Activated T-helper 2 cell treated with anti-CD3 and anti-CD28 coated beads, Interferon-gamma antibody, Interleukin-2, Interleukin-4, amounts not matched to agents 10 μg/mL and 5 μg/mL and 100 μg/mL, durations not matched to agents 14 hours and 24 hours and 36 hours (primary cell): ENCODE measurements at regions of chr3 and their contacts with region 1.

Region 1: DNA sequence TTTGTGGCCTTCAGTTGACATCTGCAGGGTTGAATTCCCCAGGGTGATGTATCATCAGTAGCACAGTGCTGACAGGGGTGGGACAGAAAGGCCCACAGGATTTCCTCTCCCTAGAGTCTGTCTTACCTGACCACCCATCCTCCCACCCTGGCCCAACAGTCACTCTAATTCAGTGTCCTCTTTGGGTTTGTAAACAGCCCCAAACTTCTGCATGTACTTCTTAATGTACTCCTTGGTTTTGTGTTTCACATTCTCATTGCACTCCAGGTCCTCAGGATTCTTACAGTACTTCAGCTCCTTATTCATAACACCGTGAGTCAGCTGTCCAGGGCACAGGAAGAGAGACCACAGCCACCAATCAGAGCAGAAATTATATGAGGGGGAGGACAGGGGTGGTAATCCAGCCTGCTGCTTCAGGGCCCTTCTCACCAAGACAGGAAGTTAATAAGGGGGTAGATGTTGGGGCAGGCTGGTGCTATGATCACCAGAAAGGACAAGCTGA is 37.5 kb downstream of the NBEAL2 start:
- DNase-seq: no peak
- H3K4me3 Mint-ChIP-seq: peak overlapping the region; percentile 13
- H3K27ac Mint-ChIP-seq: peak overlapping the region; percentile 75
- H3K4me1 Mint-ChIP-seq: peaks cover 38% of the 10 kb centered on the region
- H3K27me3 Mint-ChIP-seq: no peaks in the 10 kb centered on the region

Region 2: GRCh38 chr3:46959161-46959511 is 57.8 kb before region 1 on chr3:
- intact Hi-C with region 1: loop called (anchors 5 kb)
- DNase-seq: no peak
- H3K4me3 Mint-ChIP-seq: peak overlapping the region; percentile 40
- H3K27ac Mint-ChIP-seq: peak overlapping the region; percentile 89
- H3K4me1 Mint-ChIP-seq: peaks cover 74% of the 10 kb centered on the region
- H3K27me3 Mint-ChIP-seq: no peaks in the 10 kb centered on the region

Region 3: GRCh38 chr3:47057212-47057671 is 40.3 kb after region 1 on chr3:
- intact Hi-C with region 1: loop called (anchors 1 kb)
- DNase-seq: peak; percentile 47
- H3K4me3 Mint-ChIP-seq: no peak overlapping the region
- H3K27ac Mint-ChIP-seq: peak overlapping the region; percentile 69
- H3K4me1 Mint-ChIP-seq: peaks cover 30% of the 10 kb centered on the region
- H3K27me3 Mint-ChIP-seq: no peaks in the 10 kb centered on the region